GM12878 (cell line): ENCODE measurements at regions of chr3 and their contacts with region 1.

Region 1: GRCh38 chr3:48151058-48151806 is 37.0 kb downstream of the CDC25A start:
- DNase-seq: peak; percentile 43
- ATAC-seq: peak; percentile 100
- H3K4me3 ChIP-seq: no peak overlapping the region
- H3K27ac ChIP-seq: no peak overlapping the region
- H3K4me1 ChIP-seq: no peaks in the 10 kb centered on the region; the same call in 1 of the 2 replicates
- H3K27me3 ChIP-seq: no peaks in the 10 kb centered on the region
- CTCF ChIP-seq: peak; percentile 85 to 91 (median 90)
- EP300 ChIP-seq: no peak
- POLR2A ChIP-seq: no peak
- RAD21 ChIP-seq: peak; percentile 96

Region 2: DNA sequence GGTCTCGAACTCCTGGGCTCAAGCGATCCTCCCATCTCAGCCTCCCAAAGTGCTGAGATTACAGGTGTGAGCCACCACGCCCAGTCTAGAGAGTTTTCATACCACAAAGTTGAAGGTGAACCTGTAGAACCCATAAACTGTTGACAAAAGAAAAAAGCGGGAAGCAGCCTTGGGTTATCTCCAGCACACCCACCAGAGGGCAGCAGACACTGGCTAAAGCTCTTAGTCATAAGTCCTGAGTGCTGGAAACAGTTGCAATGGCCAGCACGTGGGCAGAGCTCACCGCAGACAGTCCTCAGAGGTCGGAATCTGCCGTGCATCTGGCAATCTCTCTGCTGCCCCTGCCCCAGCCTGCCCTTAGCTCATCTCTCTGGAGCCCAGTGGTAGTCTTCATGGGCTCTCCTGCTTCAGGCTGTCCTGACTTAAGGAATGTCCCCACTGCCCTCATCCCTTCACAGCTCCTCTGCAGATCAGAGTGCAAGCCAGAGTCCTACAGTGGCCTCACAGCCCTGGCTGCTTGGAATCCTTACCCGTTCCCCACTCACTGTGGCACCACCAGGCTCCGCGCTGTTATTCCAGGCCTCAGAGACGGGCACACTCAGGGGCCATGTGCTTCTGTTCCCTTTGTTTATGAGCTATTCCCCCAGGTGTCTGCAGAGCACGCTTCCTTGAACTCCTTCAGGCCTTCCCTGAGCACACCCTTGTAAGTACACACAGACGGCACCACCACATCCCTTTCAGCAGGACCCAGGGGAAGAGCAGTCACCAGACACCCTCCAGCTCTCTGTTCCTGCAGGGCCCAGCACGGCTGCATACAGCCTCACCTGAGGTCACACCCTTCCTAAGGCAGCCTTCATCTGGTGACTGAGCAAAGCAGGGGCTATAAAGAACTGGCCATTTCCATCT is 628.9 kb before region 1 on chr3:
- CTCF ChIA-PET with region 1: interaction called, 18 read pairs
- POLR2A ChIA-PET with region 1: no interaction called
- RAD21 ChIA-PET with region 1: interaction called, 15 read pairs
- SMC1A ChIA-PET with region 1: interaction called, 5 read pairs
- in situ Hi-C with region 1: loop called (anchors 10 kb)
- intact Hi-C with region 1: loop called (anchors 10 kb)
- DNase-seq: peak; percentile 69
- ATAC-seq: peak; percentile 99
- H3K4me3 ChIP-seq: no peak overlapping the region
- H3K27ac ChIP-seq: no peak overlapping the region
- H3K4me1 ChIP-seq: peaks cover 6% of the 10 kb centered on the region; the same call in 1 of the 2 replicates
- H3K27me3 ChIP-seq: no peaks in the 10 kb centered on the region; a peak in 1 of 4 replicates
- CTCF ChIP-seq: peak; percentile 84 to 94 (median 85); a peak in 5 of 6 replicates
- EP300 ChIP-seq: no peak
- POLR2A ChIP-seq: no peak
- RAD21 ChIP-seq: peak; percentile 97

Region 3: DNA sequence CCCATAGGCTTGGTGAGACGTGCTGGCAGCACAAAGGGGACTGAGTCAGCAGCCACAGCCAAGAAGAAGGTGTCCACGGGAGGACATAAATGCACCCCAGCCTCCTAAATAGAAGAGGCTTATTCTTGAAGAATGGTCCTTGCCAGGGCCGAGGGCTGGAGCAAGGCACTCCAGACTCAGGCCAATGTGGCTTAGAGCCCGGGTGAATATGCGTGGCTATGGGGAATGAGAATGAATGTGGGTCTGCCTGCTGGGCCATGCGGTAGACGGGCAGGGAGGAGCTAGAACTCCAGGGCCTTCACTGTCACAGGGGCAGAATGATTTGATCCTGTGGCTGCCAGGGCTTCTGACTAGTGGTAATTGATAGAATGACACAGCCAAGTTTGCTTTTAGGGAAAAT is 314.2 kb before region 1 on chr3:
- CTCF ChIA-PET with region 1: interaction called, 51 read pairs
- POLR2A ChIA-PET with region 1: interaction called, 3 read pairs
- RAD21 ChIA-PET with region 1: interaction called, 27 read pairs
- SMC1A ChIA-PET with region 1: interaction called, 20 read pairs
- in situ Hi-C with region 1: loop called (anchors 5 kb)
- intact Hi-C with region 1: loop called (anchors 1 kb)
- DNase-seq: no peak
- ATAC-seq: no peak
- H3K4me3 ChIP-seq: no peak overlapping the region
- H3K27ac ChIP-seq: no peak overlapping the region
- H3K4me1 ChIP-seq: no peaks in the 10 kb centered on the region
- H3K27me3 ChIP-seq: no peaks in the 10 kb centered on the region
- CTCF ChIP-seq: no peak
- EP300 ChIP-seq: no peak
- POLR2A ChIP-seq: no peak; the same call in 1 of the 2 replicates
- RAD21 ChIP-seq: no peak

Region 4: GRCh38 chr3:47916696-47917095 is 234.5 kb before region 1 on chr3:
- CTCF ChIA-PET with region 1: interaction called, 13 read pairs
- POLR2A ChIA-PET with region 1: interaction called, 4 read pairs
- RAD21 ChIA-PET with region 1: no interaction called
- SMC1A ChIA-PET with region 1: no interaction called
- in situ Hi-C with region 1: no loop called
- intact Hi-C with region 1: no loop called
- DNase-seq: no peak
- ATAC-seq: no peak
- H3K4me3 ChIP-seq: no peak overlapping the region
- H3K27ac ChIP-seq: no peak overlapping the region
- H3K4me1 ChIP-seq: no peaks in the 10 kb centered on the region
- H3K27me3 ChIP-seq: no peaks in the 10 kb centered on the region
- CTCF ChIP-seq: no peak
- EP300 ChIP-seq: no peak
- POLR2A ChIP-seq: no peak
- RAD21 ChIP-seq: no peak

Region 5: DNA sequence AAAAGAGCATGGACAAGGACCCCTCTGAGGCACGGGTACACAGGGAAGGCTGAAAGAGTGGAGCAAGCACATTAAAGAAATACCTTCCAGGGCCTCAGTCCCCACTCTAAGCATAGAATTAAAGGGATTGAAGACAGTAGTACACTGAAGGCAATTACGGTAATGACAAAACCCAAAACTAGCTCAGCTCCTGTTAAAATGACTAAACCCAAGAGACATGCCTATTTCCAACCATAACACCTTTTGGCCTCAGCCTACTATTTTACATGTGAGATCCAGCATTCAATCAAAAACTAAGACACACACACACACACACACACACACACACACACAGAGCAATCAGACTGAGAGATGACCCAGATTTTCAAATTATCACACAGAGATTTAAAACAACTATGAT is 154.8 kb before region 1 on chr3:
- CTCF ChIA-PET with region 1: interaction called, 13 read pairs
- POLR2A ChIA-PET with region 1: no interaction called
- RAD21 ChIA-PET with region 1: interaction called, 7 read pairs
- SMC1A ChIA-PET with region 1: interaction called, 5 read pairs
- in situ Hi-C with region 1: loop called (anchors 5 kb)
- intact Hi-C with region 1: loop called (anchors 2 kb)
- DNase-seq: no peak
- ATAC-seq: no peak
- H3K4me3 ChIP-seq: no peak overlapping the region
- H3K27ac ChIP-seq: no peak overlapping the region
- H3K4me1 ChIP-seq: no peaks in the 10 kb centered on the region
- H3K27me3 ChIP-seq: no peaks in the 10 kb centered on the region
- CTCF ChIP-seq: no peak
- EP300 ChIP-seq: no peak
- POLR2A ChIP-seq: no peak
- RAD21 ChIP-seq: no peak

Region 6: GRCh38 chr3:48034000-48034516 is 117.2 kb before region 1 on chr3:
- CTCF ChIA-PET with region 1: interaction called, 11 read pairs
- POLR2A ChIA-PET with region 1: no interaction called
- RAD21 ChIA-PET with region 1: interaction called, 7 read pairs
- SMC1A ChIA-PET with region 1: interaction called, 5 read pairs
- in situ Hi-C with region 1: no loop called
- intact Hi-C with region 1: no loop called
- DNase-seq: no peak
- ATAC-seq: peak; percentile 81
- H3K4me3 ChIP-seq: no peak overlapping the region
- H3K27ac ChIP-seq: peak overlapping the region; percentile 37; the same call in 1 of the 2 replicates
- H3K4me1 ChIP-seq: peaks cover 13% of the 10 kb centered on the region
- H3K27me3 ChIP-seq: no peaks in the 10 kb centered on the region
- CTCF ChIP-seq: no peak
- EP300 ChIP-seq: 0 out of 4 replicates have a peak, but pooled peaks of 1 of the 2 experiments have one; percentile 18
- POLR2A ChIP-seq: no peak
- RAD21 ChIP-seq: no peak